ENCODE measurements at regions of chr4 and their contacts with region 1.

Region 1: GRCh38 chr4:106809076-106809475 is 227.0 kb downstream of the DKK2 start:
- H3K4me3 Mint-ChIP-seq: no peak overlapping the region
- H3K27ac Mint-ChIP-seq: no peak overlapping the region
- H3K4me1 Mint-ChIP-seq: no peaks in the 10 kb centered on the region
- H3K27me3 Mint-ChIP-seq: peaks cover 2% of the 10 kb centered on the region

Region 2: GRCh38 chr4:106329041-106329618 is 479.9 kb before region 1 on chr4:
- intact Hi-C with region 1: loop called (anchors 2 kb)
- H3K4me3 Mint-ChIP-seq: no peak overlapping the region
- H3K27ac Mint-ChIP-seq: no peak overlapping the region
- H3K4me1 Mint-ChIP-seq: no peaks in the 10 kb centered on the region
- H3K27me3 Mint-ChIP-seq: no peaks in the 10 kb centered on the region

Region 3: DNA sequence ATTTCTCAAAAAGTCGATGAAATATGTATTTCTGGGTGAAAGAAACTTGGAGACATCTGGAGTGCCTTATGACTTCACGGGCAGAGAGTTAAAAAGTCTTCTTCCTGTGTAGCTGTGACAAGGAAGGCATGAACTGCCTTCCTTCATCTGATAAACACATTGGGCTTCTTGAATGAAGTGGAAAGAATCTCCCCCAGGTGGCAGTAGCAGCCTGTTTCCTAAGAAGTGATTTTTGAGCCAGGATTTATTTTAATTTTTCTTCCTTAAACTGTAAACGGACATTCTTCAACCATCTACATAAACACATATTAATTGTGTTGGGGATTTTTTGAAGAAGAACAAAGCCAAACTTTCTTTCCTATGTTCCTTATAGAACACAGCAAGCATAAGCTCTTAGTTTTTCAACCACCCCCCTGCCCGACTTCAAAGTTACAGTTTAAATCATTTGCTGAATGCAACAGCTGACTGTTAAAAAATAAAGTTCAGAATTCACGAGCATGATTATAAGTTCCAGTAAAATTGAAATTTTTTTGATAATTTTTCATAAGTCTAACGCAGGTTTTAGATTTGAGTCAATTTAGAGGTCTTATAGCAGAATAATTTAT is 439.5 kb before region 1 on chr4:
- intact Hi-C with region 1: loop called (anchors 2 kb)
- H3K4me3 Mint-ChIP-seq: no peak overlapping the region
- H3K27ac Mint-ChIP-seq: no peak overlapping the region
- H3K4me1 Mint-ChIP-seq: peaks cover 14% of the 10 kb centered on the region
- H3K27me3 Mint-ChIP-seq: peaks cover 5% of the 10 kb centered on the region

Measured in dendritic cell treated with granulocyte-macrophage colony-stimulating factor and Interleukin-4, amounts not matched to agents 40 ng/mL and 50 ng/mL, for 4 days (primary cell).